ENCODE measurements at regions of chr6 and their contacts with region 1.

Region 1: DNA sequence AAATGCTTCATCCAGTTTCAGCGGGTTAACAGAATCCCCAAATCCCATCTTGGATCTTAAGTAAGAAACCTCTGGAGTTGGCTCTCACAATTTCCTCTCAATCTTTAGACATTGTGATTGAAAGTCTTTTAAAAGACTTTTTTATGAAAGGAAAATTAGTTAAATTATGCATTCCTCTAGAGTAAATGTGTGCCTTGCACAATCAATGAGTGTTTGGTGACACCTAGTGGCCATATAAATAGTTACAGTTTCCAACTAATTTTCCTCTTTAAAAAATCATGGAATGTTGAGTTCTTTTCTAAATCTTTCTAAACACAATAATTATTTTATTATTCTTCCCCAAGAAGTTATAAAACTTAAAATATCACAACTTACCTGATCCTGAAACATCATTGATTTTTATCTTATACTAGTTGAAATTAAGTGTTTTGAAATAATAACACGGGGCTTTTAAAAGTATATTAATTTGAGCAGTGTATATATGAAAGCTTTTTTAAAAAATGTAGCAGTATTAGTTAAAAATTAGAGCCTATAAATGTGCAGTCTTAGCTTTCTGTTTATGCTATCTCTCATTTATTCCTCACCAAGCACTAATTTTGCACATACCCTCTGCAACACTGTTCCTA is 66.4 kb downstream of the PKHD1 start:
- DNase-seq: no peak

Region 2: GRCh38 chr6:50816115-50816675 is 1204.9 kb before region 1 on chr6:
- intact Hi-C with region 1: loop called (anchors 10 kb)
- DNase-seq: no peak

Region 3: DNA sequence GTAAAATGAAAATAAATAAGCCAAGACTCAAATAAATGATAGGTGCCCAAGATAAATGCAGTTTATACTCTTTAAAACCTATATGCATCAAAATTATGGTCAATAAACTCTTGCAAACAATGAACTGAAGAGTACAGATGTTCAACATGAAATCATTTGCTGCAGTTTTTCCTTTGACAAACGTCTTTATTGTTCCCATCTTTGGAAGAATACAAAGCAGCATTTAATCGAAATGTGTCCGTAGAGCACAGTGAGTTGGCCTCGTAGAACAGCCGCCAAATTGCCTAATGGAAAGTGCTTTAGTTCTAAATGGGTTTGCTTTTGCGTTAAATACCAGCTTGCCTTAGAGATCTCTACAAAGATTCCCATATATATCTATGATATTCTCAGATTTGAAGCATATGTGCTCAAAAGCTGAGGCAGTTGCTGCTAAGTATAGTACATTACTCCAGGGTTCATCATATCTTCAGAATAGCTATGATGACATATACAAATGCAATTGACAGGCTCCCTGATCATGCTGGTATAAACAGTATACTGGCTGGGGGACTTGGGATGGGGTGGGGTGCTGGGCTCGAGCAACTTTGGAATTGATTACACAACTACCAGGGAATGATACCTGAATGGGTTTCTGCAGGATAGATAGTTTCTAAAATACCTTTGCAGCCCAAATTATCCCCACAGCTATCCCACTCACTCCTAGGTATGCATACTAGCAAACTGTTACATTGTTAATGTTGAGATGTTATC is 380.9 kb before region 1 on chr6:
- intact Hi-C with region 1: no loop called
- DNase-seq: no peak

Region 4: GRCh38 chr6:51855310-51856082 is 165.6 kb before region 1 on chr6:
- intact Hi-C with region 1: loop called (anchors 10 kb)
- DNase-seq: no peak